CD8-positive, alpha-beta T cell (primary cell): ENCODE measurements at regions of chr14 and their contacts with region 1.

Region 1: GRCh38 chr14:101707068-101707842 is 54.3 kb upstream of the PPP2R5C start:
- DNase-seq: peak in 7 of 9 experiments; percentile 53 to 93 (median 74)
- ATAC-seq: peak; percentile 69
- H3K4me3 ChIP-seq: no peak overlapping the region
- H3K4me3 Mint-ChIP-seq: peak overlapping the region; percentile 12
- H3K27ac ChIP-seq: peak overlapping the region; percentile 11 to 78
- H3K27ac Mint-ChIP-seq: peak overlapping the region; percentile 83
- H3K4me1 ChIP-seq: peaks cover 34% of the 10 kb centered on the region
- H3K4me1 Mint-ChIP-seq: peaks cover 31% of the 10 kb centered on the region
- H3K27me3 ChIP-seq: no peaks in the 10 kb centered on the region
- H3K27me3 Mint-ChIP-seq: no peaks in the 10 kb centered on the region
- CTCF ChIP-seq: peak; percentile 72

Region 2: GRCh38 chr14:101721951-101722661 is 14.9 kb after region 1 on chr14:
- CTCF ChIA-PET with region 1: interaction called, 30 read pairs
- POLR2A ChIA-PET with region 1: interaction called, 27 read pairs
- intact Hi-C with region 1: loop called (anchors 1 to 2 kb)
- DNase-seq: peak; percentile 60 to 97 (median 79)
- ATAC-seq: peak; percentile 80
- H3K4me3 ChIP-seq: peak overlapping the region; percentile 27 to 42
- H3K4me3 Mint-ChIP-seq: peak overlapping the region; percentile 51
- H3K27ac ChIP-seq: peak overlapping the region; percentile 89 to 94
- H3K27ac Mint-ChIP-seq: peak overlapping the region; percentile 95
- H3K4me1 ChIP-seq: peaks cover 38% of the 10 kb centered on the region
- H3K4me1 Mint-ChIP-seq: peaks cover 57% of the 10 kb centered on the region
- H3K27me3 ChIP-seq: no peaks in the 10 kb centered on the region
- H3K27me3 Mint-ChIP-seq: no peaks in the 10 kb centered on the region
- CTCF ChIP-seq: no peak

Region 3: DNA sequence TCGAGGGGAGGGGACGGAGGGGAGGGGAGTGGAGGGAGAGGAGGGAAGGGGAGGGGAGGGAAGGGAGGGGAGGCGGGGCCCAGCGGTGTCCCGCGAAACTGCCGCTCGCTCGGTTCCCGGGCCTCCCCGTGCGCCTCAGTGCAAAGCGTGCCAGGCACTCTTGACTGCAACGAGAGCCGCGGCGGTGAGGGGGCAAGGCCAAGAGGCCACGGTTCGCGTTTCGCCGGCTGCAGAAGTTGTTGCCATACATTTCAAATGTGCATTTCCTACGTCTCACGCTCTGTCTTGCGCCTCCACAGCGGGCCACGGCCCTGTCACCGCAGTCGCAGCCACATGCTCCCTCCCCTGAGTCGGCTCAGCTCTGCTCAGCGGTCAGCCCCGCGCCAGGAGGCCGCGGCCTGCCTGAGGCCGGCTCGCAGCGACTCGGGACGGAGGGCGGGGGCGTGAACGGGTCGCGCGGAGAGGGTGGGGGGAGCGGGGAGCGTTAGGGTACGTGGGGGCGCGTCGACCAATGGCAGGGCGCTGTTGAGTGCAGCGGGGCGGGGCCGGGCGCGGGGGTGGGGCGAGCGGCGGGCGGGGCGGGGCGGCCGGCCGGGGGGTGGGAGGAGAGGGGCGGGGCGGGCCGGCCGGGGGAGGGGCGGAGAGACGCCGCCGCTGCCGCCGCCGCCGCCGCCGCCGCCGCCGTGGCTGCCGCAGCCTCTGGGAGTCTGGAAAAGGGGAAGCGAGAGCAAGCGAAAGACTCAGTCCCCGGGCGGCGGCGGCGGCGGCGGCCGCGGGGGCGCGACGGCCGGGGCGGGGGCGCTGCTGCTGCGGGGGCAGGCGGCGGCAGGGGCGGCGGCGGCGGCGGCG is 54.0 kb after region 1 on chr14 and contains the start of gene PPP2R5C:
- CTCF ChIA-PET with region 1: interaction called, 19 read pairs
- POLR2A ChIA-PET with region 1: interaction called, 10 read pairs
- intact Hi-C with region 1: loop called (anchors 1 kb)
- DNase-seq: peak; percentile 74 to 94 (median 87)
- ATAC-seq: peak; percentile 61
- H3K4me3 ChIP-seq: peak within 1 kb of the TSS; percentile 97 to 98
- H3K4me3 Mint-ChIP-seq: peak within 1 kb of the TSS; percentile 95
- H3K27ac ChIP-seq: peak within 1 kb of the TSS; percentile 90 to 93
- H3K27ac Mint-ChIP-seq: peak within 1 kb of the TSS; percentile 94
- H3K4me1 ChIP-seq: peaks cover 25% of the 10 kb centered on the region
- H3K4me1 Mint-ChIP-seq: peaks cover 41% of the 10 kb centered on the region
- H3K27me3 ChIP-seq: no peaks in the 10 kb centered on the region
- H3K27me3 Mint-ChIP-seq: no peaks in the 10 kb centered on the region
- CTCF ChIP-seq: no peak
- total RNA-seq, gene PPP2R5C: 557 to 560 TPM

Region 4: GRCh38 chr14:101823511-101824120 is 116.4 kb after region 1 on chr14:
- CTCF ChIA-PET with region 1: interaction called, 7 read pairs
- POLR2A ChIA-PET with region 1: interaction called, 6 read pairs
- intact Hi-C with region 1: loop called (anchors 1 to 2 kb)
- DNase-seq: peak in 8 of 9 experiments; percentile 58 to 89 (median 75)
- ATAC-seq: peak; percentile 61
- H3K4me3 ChIP-seq: peak overlapping the region; percentile 60 to 61
- H3K4me3 Mint-ChIP-seq: peak overlapping the region; percentile 92
- H3K27ac ChIP-seq: peak overlapping the region; percentile 82 to 99
- H3K27ac Mint-ChIP-seq: peak overlapping the region; percentile 100
- H3K4me1 ChIP-seq: peaks cover 83% of the 10 kb centered on the region
- H3K4me1 Mint-ChIP-seq: peaks cover 86% of the 10 kb centered on the region
- H3K27me3 ChIP-seq: no peaks in the 10 kb centered on the region
- H3K27me3 Mint-ChIP-seq: no peaks in the 10 kb centered on the region
- CTCF ChIP-seq: no peak

Region 5: GRCh38 chr14:101889898-101890297 is 182.6 kb after region 1 on chr14:
- CTCF ChIA-PET with region 1: interaction called, 3 read pairs
- POLR2A ChIA-PET with region 1: no interaction called
- intact Hi-C with region 1: loop called (anchors 5 kb)
- DNase-seq: peak in 2 of 9 experiments; percentile 24 to 37
- ATAC-seq: peak; percentile 44
- H3K4me3 ChIP-seq: no peak overlapping the region
- H3K4me3 Mint-ChIP-seq: no peak overlapping the region
- H3K27ac ChIP-seq: no peak overlapping the region
- H3K27ac Mint-ChIP-seq: peak overlapping the region; percentile 62
- H3K4me1 ChIP-seq: no peaks in the 10 kb centered on the region
- H3K4me1 Mint-ChIP-seq: no peaks in the 10 kb centered on the region
- H3K27me3 ChIP-seq: no peaks in the 10 kb centered on the region
- H3K27me3 Mint-ChIP-seq: no peaks in the 10 kb centered on the region
- CTCF ChIP-seq: no peak

Region 6: DNA sequence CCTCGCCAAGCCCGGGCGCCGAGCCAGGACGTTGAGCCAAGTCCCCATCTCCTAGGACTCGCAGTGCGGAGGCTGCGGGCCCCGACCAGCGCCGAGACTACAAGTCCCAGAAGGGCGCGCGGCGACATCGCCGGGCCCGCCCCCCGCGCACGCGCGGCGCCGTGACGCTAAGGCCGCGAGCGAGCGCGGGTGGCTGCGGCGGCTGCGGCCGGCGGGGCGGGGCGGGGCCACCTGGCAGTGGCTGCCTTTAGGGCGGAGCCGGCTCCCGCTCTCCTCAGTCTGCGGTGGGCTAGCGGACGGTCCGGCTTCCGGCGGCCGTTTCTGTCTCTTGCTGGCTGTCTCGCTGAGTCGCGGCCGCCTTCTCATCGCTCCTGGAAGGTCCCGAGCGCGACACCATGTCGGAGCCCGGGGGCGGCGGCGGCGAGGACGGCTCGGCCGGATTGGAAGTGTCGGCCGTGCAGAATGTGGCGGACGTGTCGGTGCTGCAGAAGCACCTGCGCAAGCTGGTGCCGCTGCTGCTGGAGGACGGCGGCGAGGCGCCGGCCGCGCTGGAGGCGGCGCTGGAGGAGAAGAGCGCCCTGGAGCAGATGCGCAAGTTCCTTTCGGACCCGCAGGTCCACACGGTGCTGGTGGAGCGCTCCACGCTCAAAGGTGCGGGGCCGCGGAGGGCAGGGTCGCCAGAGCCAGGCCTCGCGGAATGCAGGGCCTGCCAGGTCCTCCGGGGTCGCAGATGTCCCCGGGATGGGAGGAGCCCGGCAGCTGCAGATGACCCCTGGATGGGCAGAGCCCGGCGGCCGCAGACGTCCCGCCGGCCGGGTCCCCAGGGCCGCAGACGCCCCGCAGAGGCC is 257.3 kb after region 1 on chr14 and contains the start of gene DYNC1H1:
- CTCF ChIA-PET with region 1: interaction called, 11 read pairs
- POLR2A ChIA-PET with region 1: interaction called, 4 read pairs
- intact Hi-C with region 1: loop called (anchors 1 to 5 kb)
- DNase-seq: peak; percentile 75 to 94 (median 87)
- ATAC-seq: peak; percentile 84
- H3K4me3 ChIP-seq: peak within 1 kb of the TSS; percentile 87 to 92
- H3K4me3 Mint-ChIP-seq: peak within 1 kb of the TSS; percentile 90
- H3K27ac ChIP-seq: peak within 1 kb of the TSS; percentile 74 to 88
- H3K27ac Mint-ChIP-seq: peak within 1 kb of the TSS; percentile 91
- H3K4me1 ChIP-seq: peaks cover 31% of the 10 kb centered on the region
- H3K4me1 Mint-ChIP-seq: peaks cover 45% of the 10 kb centered on the region
- H3K27me3 ChIP-seq: no peaks in the 10 kb centered on the region
- H3K27me3 Mint-ChIP-seq: no peaks in the 10 kb centered on the region
- CTCF ChIP-seq: no peak
- total RNA-seq, gene DYNC1H1: 359 TPM

Region 7: DNA sequence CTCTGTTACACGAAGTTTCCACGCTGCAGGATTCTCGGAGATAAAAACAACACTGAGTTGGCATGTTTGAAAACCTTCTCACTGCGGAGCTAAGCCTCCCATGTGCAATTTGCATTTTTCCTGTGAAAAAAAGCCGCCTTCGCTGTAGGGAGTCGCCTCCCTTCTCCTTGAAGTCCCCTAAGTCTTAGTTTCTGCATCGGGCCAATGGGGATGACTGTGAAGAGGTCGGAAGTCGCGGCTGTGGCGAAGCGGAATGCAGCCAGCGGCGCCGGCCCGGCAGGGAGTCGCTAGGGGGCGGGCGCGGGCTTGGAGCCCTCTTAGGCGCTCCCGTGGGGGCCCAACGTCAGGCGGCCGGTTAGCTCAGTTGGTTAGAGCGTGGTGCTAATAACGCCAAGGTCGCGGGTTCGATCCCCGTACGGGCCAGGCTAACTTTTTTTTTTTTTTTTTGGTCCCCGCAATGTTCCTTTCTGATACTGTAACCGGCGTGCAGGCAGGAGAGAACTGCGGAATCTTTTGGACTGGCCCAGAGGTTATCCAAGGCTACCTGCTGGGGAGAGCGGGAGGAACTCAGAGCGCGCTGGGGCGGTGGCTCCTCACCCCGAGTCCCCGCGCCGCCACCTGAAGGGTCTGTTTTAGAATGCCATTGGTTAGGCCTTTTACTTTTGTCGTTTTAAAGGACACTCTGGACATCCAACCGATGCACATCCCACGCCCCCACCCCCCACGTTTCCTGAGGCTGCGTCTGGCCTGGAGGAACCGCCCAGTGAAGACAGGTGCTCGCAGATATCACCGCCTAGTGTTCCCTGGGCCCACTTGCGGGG is 609.7 kb after region 1 on chr14:
- CTCF ChIA-PET with region 1: no interaction called
- POLR2A ChIA-PET with region 1: no interaction called
- intact Hi-C with region 1: loop called in 1 of 2 experiments (anchors 10 kb)
- DNase-seq: peak; percentile 86 to 100 (median 95)
- ATAC-seq: peak; percentile 55
- H3K4me3 ChIP-seq: peak overlapping the region; percentile 57 to 74
- H3K4me3 Mint-ChIP-seq: peak overlapping the region; percentile 93
- H3K27ac ChIP-seq: peak overlapping the region; percentile 42 to 73
- H3K27ac Mint-ChIP-seq: peak overlapping the region; percentile 94
- H3K4me1 ChIP-seq: peaks cover 42% of the 10 kb centered on the region
- H3K4me1 Mint-ChIP-seq: peaks cover 59% of the 10 kb centered on the region
- H3K27me3 ChIP-seq: no peaks in the 10 kb centered on the region
- H3K27me3 Mint-ChIP-seq: no peaks in the 10 kb centered on the region
- CTCF ChIP-seq: peak; percentile 82